Natural killer cell (primary cell): ENCODE measurements at regions of chr12 and their contacts with region 1.

Region 1: DNA sequence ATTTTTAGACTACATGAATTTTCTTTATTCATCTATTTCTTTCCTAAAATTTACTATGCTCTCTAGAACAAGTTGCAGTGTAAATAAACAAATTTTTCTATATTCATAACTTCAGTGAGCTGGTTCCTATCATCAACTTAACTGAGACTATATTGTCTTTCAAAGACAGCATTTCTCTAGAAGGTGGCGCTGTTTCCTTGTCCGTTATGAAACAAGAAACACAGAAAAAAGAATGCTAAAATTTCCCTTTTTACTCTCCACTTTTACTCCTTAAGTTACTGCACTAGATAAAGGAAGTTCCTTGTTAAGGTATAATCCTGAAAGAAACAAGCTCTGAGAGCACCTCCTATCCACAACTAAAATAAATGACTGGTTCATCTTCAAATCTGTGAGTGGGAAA is 8.2 kb upstream of the CLEC2A start:
- DNase-seq: peak in 1 of 2 donors; percentile 55
- ATAC-seq: peak in 1 of 3 donors; percentile 45
- H3K4me3 ChIP-seq: no peak overlapping the region
- H3K4me3 Mint-ChIP-seq: no peak overlapping the region
- H3K27ac ChIP-seq: no peak overlapping the region
- H3K27ac Mint-ChIP-seq: no peak overlapping the region
- H3K4me1 ChIP-seq: no peaks in the 10 kb centered on the region
- H3K4me1 Mint-ChIP-seq: peaks cover 7 to 11% of the 10 kb centered on the region in 2 donors
- H3K27me3 ChIP-seq: no peaks in the 10 kb centered on the region
- H3K27me3 Mint-ChIP-seq: no peaks in the 10 kb centered on the region
- CTCF ChIP-seq: peak; percentile 53

Region 2: GRCh38 chr12:9829990-9830389 is 110.4 kb before region 1 on chr12:
- intact Hi-C with region 1: no loop called
- DNase-seq: no peak
- ATAC-seq: peak in 2 of 3 donors; percentile 9 to 12
- H3K4me3 ChIP-seq: peak overlapping the region; percentile 88
- H3K4me3 Mint-ChIP-seq: peak overlapping the region; percentile 100
- H3K27ac ChIP-seq: peak overlapping the region; percentile 85
- H3K27ac Mint-ChIP-seq: peak overlapping the region in 1 of 2 donors; percentile 91
- H3K4me1 ChIP-seq: peaks cover 11% of the 10 kb centered on the region
- H3K4me1 Mint-ChIP-seq: peaks cover 16% of the 10 kb centered on the region in 2 donors
- H3K27me3 ChIP-seq: no peaks in the 10 kb centered on the region
- H3K27me3 Mint-ChIP-seq: no peaks in the 10 kb centered on the region
- CTCF ChIP-seq: no peak

Region 3: DNA sequence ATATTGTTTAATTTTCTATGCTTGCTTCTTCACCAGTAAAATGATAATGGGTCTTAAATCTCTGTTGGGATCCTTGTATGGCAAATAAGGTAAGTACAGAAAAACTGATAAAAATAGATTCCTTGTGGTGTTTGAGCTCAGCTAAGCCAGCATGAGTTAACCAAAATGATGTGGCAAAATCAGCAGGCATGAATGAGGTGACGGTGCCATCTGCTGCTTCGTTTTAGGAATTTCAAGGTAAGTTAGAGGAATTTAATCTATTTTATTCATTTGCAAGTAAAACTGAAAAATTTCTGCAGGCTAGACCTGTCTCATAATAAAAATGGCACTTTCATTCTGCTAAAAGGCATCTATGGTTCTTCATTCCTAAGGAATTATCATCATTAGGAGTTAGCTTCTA is 199.6 kb after region 1 on chr12:
- intact Hi-C with region 1: loop called (anchors 10 kb)
- DNase-seq: peak in 1 of 2 donors; percentile 74
- ATAC-seq: peak; percentile 62 to 66 (median 63)
- H3K4me3 ChIP-seq: no peak overlapping the region
- H3K4me3 Mint-ChIP-seq: no peak overlapping the region
- H3K27ac ChIP-seq: no peak overlapping the region
- H3K27ac Mint-ChIP-seq: no peak overlapping the region
- H3K4me1 ChIP-seq: no peaks in the 10 kb centered on the region
- H3K4me1 Mint-ChIP-seq: no peaks in the 10 kb centered on the region
- H3K27me3 ChIP-seq: peaks cover 4% of the 10 kb centered on the region
- H3K27me3 Mint-ChIP-seq: peaks cover 13 to 16% of the 10 kb centered on the region in 2 donors
- CTCF ChIP-seq: peak; percentile 60